Activated CD8-positive, alpha-beta T cell treated with anti-CD3 and anti-CD28 coated beads for 36 hours (primary cell): ENCODE measurements at regions of chr15 and their contacts with region 1.

Region 1: DNA sequence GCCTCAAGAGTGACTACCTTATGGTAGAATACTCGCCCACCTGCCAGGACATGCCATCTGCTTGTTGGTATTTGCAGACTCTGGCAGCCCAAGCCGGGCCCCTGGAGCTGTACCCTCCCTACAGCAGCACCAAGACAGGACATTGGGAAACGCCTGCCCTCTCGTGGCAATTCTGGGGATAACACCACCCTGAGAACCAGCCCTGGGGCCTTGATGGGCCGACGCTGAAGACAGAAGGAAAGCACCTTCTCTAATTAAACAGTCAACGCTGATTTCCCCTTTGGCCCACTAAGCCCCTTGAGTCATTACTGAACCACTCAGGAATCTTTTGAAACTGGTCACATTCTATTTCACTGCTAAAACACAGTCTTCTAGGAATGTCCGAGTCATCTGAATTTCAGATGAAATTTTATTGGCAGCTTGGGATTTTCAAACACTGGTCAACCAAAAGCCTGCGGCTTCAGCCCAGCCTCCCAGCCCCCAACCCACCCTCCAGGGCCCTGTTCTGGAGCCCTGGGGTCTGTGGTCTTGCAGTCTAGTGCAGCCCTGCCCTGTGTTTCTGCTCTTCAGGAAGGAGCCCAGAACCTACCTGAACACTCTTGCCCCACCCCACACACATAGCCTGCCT is 91.3 kb downstream of the TMEM266 start:
- DNase-seq: peak; percentile 93
- ATAC-seq: peak; percentile 97
- H3K4me3 Mint-ChIP-seq: no peak overlapping the region
- H3K27ac Mint-ChIP-seq: peak overlapping the region; percentile 25
- H3K4me1 Mint-ChIP-seq: peaks cover 32% of the 10 kb centered on the region
- H3K27me3 Mint-ChIP-seq: peaks cover 9% of the 10 kb centered on the region
- CTCF ChIP-seq: peak; percentile 83

Region 2: DNA sequence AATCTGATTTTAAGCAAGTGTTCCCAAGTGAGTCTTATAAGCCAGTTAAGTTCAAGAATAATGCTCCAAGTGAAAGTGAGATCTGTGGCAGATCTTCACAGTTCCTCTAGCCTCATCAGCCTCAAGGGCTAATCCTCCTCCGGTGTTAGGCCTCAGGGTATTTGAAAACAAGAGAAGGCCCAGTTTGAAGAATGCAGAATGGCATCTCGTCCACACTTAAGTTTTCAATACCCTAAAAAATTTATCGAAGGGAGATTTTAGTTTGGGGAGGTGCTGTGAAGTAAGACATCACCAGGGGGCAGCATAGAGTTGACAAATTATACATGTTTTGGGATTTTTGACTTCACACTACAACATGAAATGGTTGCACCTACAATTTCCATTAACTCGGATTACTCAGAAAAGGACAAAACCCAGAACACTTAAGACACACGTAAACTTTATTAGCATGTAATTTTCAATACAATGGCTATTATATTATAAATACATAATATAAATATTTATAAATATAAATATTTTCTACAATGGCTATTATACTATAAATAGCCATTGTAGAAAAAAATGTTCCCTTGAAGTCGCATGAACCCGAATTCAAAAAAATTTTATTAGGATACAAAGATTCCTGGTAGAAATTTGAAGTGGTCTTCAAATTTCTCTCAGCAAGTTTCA is 93.6 kb before region 1 on chr15:
- CTCF ChIA-PET with region 1: interaction called, 130 read pairs
- POLR2A ChIA-PET with region 1: interaction called, 4 read pairs
- intact Hi-C with region 1: no loop called
- DNase-seq: peak; percentile 70
- ATAC-seq: no peak
- H3K4me3 Mint-ChIP-seq: no peak overlapping the region
- H3K27ac Mint-ChIP-seq: no peak overlapping the region
- H3K4me1 Mint-ChIP-seq: peaks cover 43% of the 10 kb centered on the region
- H3K27me3 Mint-ChIP-seq: peaks cover 40% of the 10 kb centered on the region
- CTCF ChIP-seq: peak; percentile 88